ENCODE measurements at regions of chr15 and their contacts with region 1.

Region 1: GRCh38 chr15:67150028-67150860 is 84.8 kb downstream of the SMAD3 start:
- DNase-seq: peak; percentile 99
- H3K4me3 ChIP-seq: peak overlapping the region in 2 of 3 experiments; percentile 5 to 30
- H3K27ac ChIP-seq: peak overlapping the region; percentile 100
- H3K4me1 ChIP-seq: peaks cover 53% of the 10 kb centered on the region
- H3K27me3 ChIP-seq: no peaks in the 10 kb centered on the region
- CTCF ChIP-seq: no peak
- POLR2A ChIP-seq: no peak

Region 2: GRCh38 chr15:67013696-67014095 is 136.5 kb before region 1 on chr15:
- CTCF ChIA-PET with region 1: no interaction called
- POLR2A ChIA-PET with region 1: no interaction called
- dilution Hi-C with region 1: no loop called
- intact Hi-C with region 1: loop called (anchors 5 kb)
- DNase-seq: peak; percentile 97
- H3K4me3 ChIP-seq: no peak overlapping the region
- H3K27ac ChIP-seq: peak overlapping the region; percentile 73
- H3K4me1 ChIP-seq: peaks cover 21% of the 10 kb centered on the region
- H3K27me3 ChIP-seq: no peaks in the 10 kb centered on the region
- CTCF ChIP-seq: no peak
- POLR2A ChIP-seq: peak; percentile 60

Region 3: GRCh38 chr15:67091071-67091979 is 58.9 kb before region 1 on chr15:
- CTCF ChIA-PET with region 1: no interaction called
- POLR2A ChIA-PET with region 1: no interaction called
- dilution Hi-C with region 1: no loop called
- intact Hi-C with region 1: loop called (anchors 1 kb)
- DNase-seq: peak; percentile 99
- H3K4me3 ChIP-seq: peak overlapping the region in 1 of 3 experiments; percentile 2
- H3K27ac ChIP-seq: peak overlapping the region; percentile 99
- H3K4me1 ChIP-seq: peaks cover 57% of the 10 kb centered on the region
- H3K27me3 ChIP-seq: no peaks in the 10 kb centered on the region
- CTCF ChIP-seq: no peak
- POLR2A ChIP-seq: peak; percentile 61

Region 4: DNA sequence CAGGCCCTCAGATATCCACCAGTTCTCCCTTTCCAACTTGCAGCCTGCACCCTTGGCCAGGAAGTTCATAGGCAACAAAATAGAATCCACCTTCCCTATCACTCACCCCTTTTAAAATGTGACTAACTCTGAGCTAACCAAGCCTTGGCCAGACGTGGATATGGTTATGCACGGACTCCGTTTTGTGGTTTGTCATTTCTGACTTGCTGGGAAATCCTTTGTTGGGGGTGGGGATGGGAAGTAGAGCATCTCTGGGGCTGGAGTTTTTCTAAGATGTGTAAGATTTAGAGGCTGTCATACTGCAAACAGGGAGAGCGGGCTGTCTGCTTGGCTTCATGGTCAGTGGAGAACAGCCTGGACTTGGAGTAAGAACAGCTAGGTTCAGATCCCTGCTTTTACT is 22.3 kb before region 1 on chr15:
- CTCF ChIA-PET with region 1: interaction called, 6 read pairs
- POLR2A ChIA-PET with region 1: interaction called, 3 read pairs
- dilution Hi-C with region 1: no loop called
- intact Hi-C with region 1: loop called (anchors 1 kb)
- DNase-seq: peak; percentile 62
- H3K4me3 ChIP-seq: no peak overlapping the region
- H3K27ac ChIP-seq: peak overlapping the region; percentile 80
- H3K4me1 ChIP-seq: peaks cover 64% of the 10 kb centered on the region
- H3K27me3 ChIP-seq: no peaks in the 10 kb centered on the region
- CTCF ChIP-seq: no peak
- POLR2A ChIP-seq: peak; percentile 11

Region 5: GRCh38 chr15:67175643-67176071 is 25.4 kb after region 1 on chr15:
- CTCF ChIA-PET with region 1: interaction called, 6 read pairs
- POLR2A ChIA-PET with region 1: interaction called, 6 read pairs
- dilution Hi-C with region 1: no loop called
- intact Hi-C with region 1: loop called (anchors 1 kb)
- DNase-seq: peak; percentile 54
- H3K4me3 ChIP-seq: no peak overlapping the region
- H3K27ac ChIP-seq: peak overlapping the region; percentile 87
- H3K4me1 ChIP-seq: peaks cover 56% of the 10 kb centered on the region
- H3K27me3 ChIP-seq: no peaks in the 10 kb centered on the region
- CTCF ChIP-seq: no peak
- POLR2A ChIP-seq: no peak

Region 6: GRCh38 chr15:67372543-67372942 is 222.3 kb after region 1 on chr15:
- CTCF ChIA-PET with region 1: no interaction called
- POLR2A ChIA-PET with region 1: no interaction called
- dilution Hi-C with region 1: no loop called
- intact Hi-C with region 1: no loop called
- DNase-seq: no peak
- H3K4me3 ChIP-seq: no peak overlapping the region
- H3K27ac ChIP-seq: no peak overlapping the region
- H3K4me1 ChIP-seq: no peaks in the 10 kb centered on the region
- H3K27me3 ChIP-seq: peaks cover 8 to 12% of the 10 kb centered on the region in 2 experiments
- CTCF ChIP-seq: no peak
- POLR2A ChIP-seq: no peak

Region 7: GRCh38 chr15:67422296-67422695 is 272.1 kb after region 1 on chr15:
- CTCF ChIA-PET with region 1: no interaction called
- POLR2A ChIA-PET with region 1: no interaction called
- dilution Hi-C with region 1: no loop called
- intact Hi-C with region 1: no loop called
- DNase-seq: no peak
- H3K4me3 ChIP-seq: no peak overlapping the region
- H3K27ac ChIP-seq: no peak overlapping the region
- H3K4me1 ChIP-seq: no peaks in the 10 kb centered on the region
- H3K27me3 ChIP-seq: no peaks in the 10 kb centered on the region
- CTCF ChIP-seq: no peak
- POLR2A ChIP-seq: no peak